ENCODE measurements at regions of chr10 and their contacts with region 1.

Region 1: GRCh38 chr10:35140727-35141126 is 14.1 kb downstream of the CREM start:
- DNase-seq: no peak
- ATAC-seq: peak in 3 of 4 donors; percentile 43 to 74 (median 74)
- H3K4me3 ChIP-seq: no peak overlapping the region
- H3K27ac ChIP-seq: peak overlapping the region in 4 of 12 donors; percentile 4 to 21 (median 14)
- H3K4me1 ChIP-seq: peaks cover 0 to 22% (median 5%) of the 10 kb centered on the region in 12 donors
- H3K27me3 ChIP-seq: no peaks in the 10 kb centered on the region
- CTCF ChIP-seq: no peak
- POLR2A ChIP-seq: no peak

Region 2: DNA sequence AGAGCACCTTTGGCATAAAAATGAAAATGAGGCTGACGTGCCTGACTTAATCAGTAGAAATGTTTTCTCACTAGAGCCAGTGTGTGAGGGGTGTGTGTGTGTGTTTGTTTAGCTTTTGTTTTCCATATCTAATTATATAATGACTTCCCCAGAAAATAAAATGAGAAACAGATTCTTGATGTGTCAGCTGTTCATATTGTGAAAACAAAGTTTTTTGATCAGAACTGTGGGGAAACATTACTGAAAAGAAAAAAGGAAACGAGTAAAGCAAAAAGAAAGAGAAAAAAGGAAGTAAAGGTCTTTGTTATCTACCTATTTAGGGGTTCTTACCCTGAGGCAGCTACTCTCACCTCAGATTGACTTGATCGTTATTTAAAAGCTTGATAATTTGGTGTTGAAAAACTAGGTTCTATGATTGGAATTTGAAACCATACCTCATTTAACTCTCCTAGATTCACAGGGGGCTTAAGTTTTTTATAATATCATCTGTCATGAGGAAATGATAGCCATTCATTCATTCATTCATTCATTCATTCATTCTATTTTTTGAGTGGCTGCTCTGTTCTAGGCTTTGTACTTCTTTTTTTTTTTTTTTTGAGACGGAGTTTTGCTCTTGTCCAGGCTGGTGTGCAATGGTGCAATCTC is 43.9 kb after region 1 on chr10:
- intact Hi-C with region 1: loop called in 1 of 10 experiments (anchors 5 kb)
- DNase-seq: no peak
- ATAC-seq: no peak
- H3K4me3 ChIP-seq: no peak overlapping the region
- H3K27ac ChIP-seq: peak overlapping the region in 3 of 12 donors; percentile 29 to 64 (median 44)
- H3K4me1 ChIP-seq: peaks cover 0 to 5% (median 0%) of the 10 kb centered on the region in 12 donors
- H3K27me3 ChIP-seq: no peaks in the 10 kb centered on the region
- CTCF ChIP-seq: no peak
- POLR2A ChIP-seq: no peak

Region 3: GRCh38 chr10:35316218-35316967 is 175.7 kb after region 1 on chr10:
- intact Hi-C with region 1: no loop called
- DNase-seq: no peak
- ATAC-seq: no peak
- H3K4me3 ChIP-seq: no peak overlapping the region
- H3K27ac ChIP-seq: no peak overlapping the region
- H3K4me1 ChIP-seq: peaks cover 0 to 4% (median 0%) of the 10 kb centered on the region in 12 donors
- H3K27me3 ChIP-seq: no peaks in the 10 kb centered on the region
- CTCF ChIP-seq: no peak
- POLR2A ChIP-seq: no peak